ENCODE measurements at regions of chr18 and their contacts with region 1.

Region 1: DNA sequence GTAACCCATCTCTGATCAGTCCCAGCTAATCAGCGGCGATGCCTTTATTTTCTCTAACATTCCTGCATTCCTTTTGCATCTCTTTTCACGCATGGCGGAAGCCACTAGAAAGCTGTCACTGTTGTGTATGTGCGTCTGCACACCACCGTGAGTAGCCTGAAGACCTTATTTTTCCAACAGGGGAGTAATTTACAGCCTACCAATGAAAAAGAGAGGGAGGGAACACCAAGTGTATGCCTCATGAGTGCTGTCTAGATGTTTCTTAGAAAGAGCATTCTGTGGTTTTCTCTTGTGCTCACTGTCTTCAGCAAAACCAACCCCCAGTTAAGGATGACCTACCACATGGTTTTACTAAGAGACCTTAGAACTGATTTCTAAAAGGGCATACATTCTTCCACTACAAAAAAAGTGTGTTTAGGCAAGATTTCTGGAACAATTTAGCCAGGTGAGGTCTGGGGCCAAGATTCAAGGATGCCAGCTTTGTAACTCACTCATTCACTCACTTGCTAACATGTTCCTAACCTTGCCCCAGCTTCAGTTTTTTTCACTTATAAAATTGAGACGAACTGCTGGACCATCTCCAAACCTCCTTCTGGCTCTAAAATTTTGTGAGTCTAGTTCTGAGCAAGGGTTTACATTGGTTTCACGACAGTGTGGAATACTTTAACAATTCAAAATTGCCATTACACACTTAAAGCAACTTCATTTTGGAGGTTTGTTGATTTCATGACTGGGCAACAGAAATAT is 51.4 kb downstream of the BCL2 start:
- DNase-seq: no peak
- H3K4me3 Mint-ChIP-seq: peak overlapping the region; percentile 60
- H3K27ac Mint-ChIP-seq: peak overlapping the region; percentile 83
- H3K4me1 Mint-ChIP-seq: peaks cover 57% of the 10 kb centered on the region
- H3K27me3 Mint-ChIP-seq: no peaks in the 10 kb centered on the region

Region 2: GRCh38 chr18:63004466-63005089 is 263.6 kb before region 1 on chr18:
- intact Hi-C with region 1: no loop called
- DNase-seq: no peak
- H3K4me3 Mint-ChIP-seq: no peak overlapping the region
- H3K27ac Mint-ChIP-seq: no peak overlapping the region
- H3K4me1 Mint-ChIP-seq: no peaks in the 10 kb centered on the region
- H3K27me3 Mint-ChIP-seq: peaks cover 6% of the 10 kb centered on the region

Region 3: DNA sequence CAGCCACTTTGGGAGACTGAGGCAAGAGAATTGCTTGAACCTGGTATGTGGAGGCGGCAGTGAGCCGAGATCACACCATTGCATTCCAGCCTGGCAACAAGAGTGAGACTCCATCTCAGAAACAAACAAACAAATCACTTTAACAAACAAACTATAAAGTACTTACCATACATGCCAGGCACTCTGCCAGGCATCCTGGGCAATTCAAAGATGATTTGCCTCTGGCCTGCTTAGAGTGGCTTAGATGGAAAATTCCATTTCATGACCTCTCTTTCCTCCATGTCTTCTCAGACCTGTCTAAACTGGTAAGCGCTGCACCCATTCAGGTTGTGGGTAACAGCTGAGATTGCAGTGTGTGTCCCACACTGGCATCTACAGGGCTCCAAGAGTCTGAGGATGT is 221.8 kb before region 1 on chr18:
- intact Hi-C with region 1: no loop called
- DNase-seq: no peak
- H3K4me3 Mint-ChIP-seq: no peak overlapping the region
- H3K27ac Mint-ChIP-seq: no peak overlapping the region
- H3K4me1 Mint-ChIP-seq: peaks cover 13% of the 10 kb centered on the region
- H3K27me3 Mint-ChIP-seq: peaks cover 25% of the 10 kb centered on the region

Region 4: GRCh38 chr18:63111671-63112402 is 156.3 kb before region 1 on chr18:
- intact Hi-C with region 1: no loop called
- DNase-seq: no peak
- H3K4me3 Mint-ChIP-seq: no peak overlapping the region
- H3K27ac Mint-ChIP-seq: no peak overlapping the region
- H3K4me1 Mint-ChIP-seq: peaks cover 34% of the 10 kb centered on the region
- H3K27me3 Mint-ChIP-seq: peaks cover 8% of the 10 kb centered on the region

Region 5: GRCh38 chr18:63257265-63257850 is 10.8 kb before region 1 on chr18:
- intact Hi-C with region 1: loop called (anchors 1 kb)
- DNase-seq: no peak
- H3K4me3 Mint-ChIP-seq: no peak overlapping the region
- H3K27ac Mint-ChIP-seq: peak overlapping the region; percentile 73
- H3K4me1 Mint-ChIP-seq: peaks cover 68% of the 10 kb centered on the region
- H3K27me3 Mint-ChIP-seq: no peaks in the 10 kb centered on the region

Region 6: GRCh38 chr18:63290821-63291200 is 22.7 kb after region 1 on chr18:
- intact Hi-C with region 1: loop called (anchors 2 kb)
- DNase-seq: no peak
- H3K4me3 Mint-ChIP-seq: peak overlapping the region; percentile 3
- H3K27ac Mint-ChIP-seq: peak overlapping the region; percentile 72
- H3K4me1 Mint-ChIP-seq: peaks cover 59% of the 10 kb centered on the region
- H3K27me3 Mint-ChIP-seq: no peaks in the 10 kb centered on the region

Region 7: GRCh38 chr18:63325086-63325686 is 57.0 kb after region 1 on chr18:
- intact Hi-C with region 1: no loop called
- DNase-seq: no peak
- H3K4me3 Mint-ChIP-seq: no peak overlapping the region
- H3K27ac Mint-ChIP-seq: no peak overlapping the region
- H3K4me1 Mint-ChIP-seq: peaks cover 17% of the 10 kb centered on the region
- H3K27me3 Mint-ChIP-seq: no peaks in the 10 kb centered on the region

Measured in activated T-helper 2 cell treated with anti-CD3 and anti-CD28 coated beads, Interferon-gamma antibody, Interleukin-2, Interleukin-4, amounts not matched to agents 10 μg/mL and 5 μg/mL and 100 μg/mL, durations not matched to agents 14 hours and 24 hours and 36 hours (primary cell).